ENCODE measurements at regions of chr11 and their contacts with region 1.

Region 1: GRCh38 chr11:78645226-78646202 is 70.8 kb upstream of the NARS2 start:
- DNase-seq: peak; percentile 96
- ATAC-seq: peak; percentile 73
- H3K4me3 ChIP-seq: peak overlapping the region; percentile 54
- H3K27ac ChIP-seq: peak overlapping the region; percentile 78
- H3K4me1 ChIP-seq: peaks cover 22% of the 10 kb centered on the region
- H3K27me3 ChIP-seq: no peaks in the 10 kb centered on the region
- CTCF ChIP-seq: peak; percentile 99

Region 2: DNA sequence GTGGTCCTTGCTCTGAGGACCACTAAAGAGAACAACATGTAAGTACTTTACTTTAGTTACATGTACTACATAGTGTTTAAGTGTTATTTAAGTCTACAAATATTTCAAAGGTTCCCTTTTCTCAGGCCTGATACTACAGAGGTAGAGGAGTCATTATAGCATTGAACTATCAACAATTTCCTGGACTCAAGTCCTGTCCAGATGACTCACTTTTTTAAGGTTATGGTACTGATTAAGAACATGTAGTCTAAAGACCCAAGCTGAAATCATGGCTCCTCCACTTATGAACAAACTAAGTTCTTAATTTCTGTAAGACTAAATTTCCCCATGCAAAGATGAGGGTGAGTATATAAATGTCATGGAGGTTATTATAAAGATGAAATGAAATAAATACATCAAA is 145.5 kb before region 1 on chr11:
- CTCF ChIA-PET with region 1: no interaction called
- POLR2A ChIA-PET with region 1: no interaction called
- intact Hi-C with region 1: no loop called
- DNase-seq: no peak
- ATAC-seq: no peak
- H3K4me3 ChIP-seq: no peak overlapping the region
- H3K27ac ChIP-seq: no peak overlapping the region
- H3K4me1 ChIP-seq: no peaks in the 10 kb centered on the region
- H3K27me3 ChIP-seq: no peaks in the 10 kb centered on the region
- CTCF ChIP-seq: no peak

Region 3: DNA sequence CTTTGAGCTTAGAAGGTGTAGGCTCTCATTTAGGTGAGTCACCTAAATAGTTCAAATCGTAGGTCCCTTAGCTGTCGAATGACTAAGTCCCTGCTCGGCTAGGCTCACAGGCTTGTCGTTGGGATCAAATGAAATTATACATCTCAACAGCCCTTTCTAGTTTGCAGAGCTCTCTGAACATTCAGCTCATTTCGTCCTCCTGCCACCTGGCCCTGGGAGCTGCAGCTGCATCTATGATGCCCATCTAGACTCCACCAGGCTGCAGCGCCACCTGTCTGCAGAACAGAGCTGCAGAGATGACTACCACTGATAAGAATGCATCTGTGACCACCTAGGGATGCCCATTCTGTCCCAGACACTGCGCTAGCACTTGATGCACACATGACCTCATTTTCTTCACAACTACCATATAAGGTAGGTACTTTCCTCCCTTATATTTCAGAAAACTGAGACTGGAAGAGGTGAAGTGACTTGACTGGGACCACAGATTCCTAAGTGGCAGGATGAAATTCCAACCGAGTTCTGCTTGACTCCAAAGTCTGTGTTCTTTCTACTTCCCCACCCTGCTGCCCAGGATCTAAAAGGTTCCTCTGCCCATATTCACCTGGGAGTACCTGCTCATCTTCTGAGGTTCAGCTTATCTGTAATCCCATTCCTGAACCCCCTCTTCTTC is 70.3 kb after region 1 on chr11:
- CTCF ChIA-PET with region 1: interaction called, 129 read pairs
- POLR2A ChIA-PET with region 1: interaction called, 5 read pairs
- intact Hi-C with region 1: loop called (anchors 1 kb)
- DNase-seq: peak; percentile 99
- ATAC-seq: peak; percentile 90
- H3K4me3 ChIP-seq: no peak overlapping the region
- H3K27ac ChIP-seq: peak overlapping the region; percentile 77
- H3K4me1 ChIP-seq: peaks cover 33% of the 10 kb centered on the region
- H3K27me3 ChIP-seq: no peaks in the 10 kb centered on the region
- CTCF ChIP-seq: peak; percentile 98

Region 4: GRCh38 chr11:79100093-79100910 is 454.8 kb after region 1 on chr11:
- CTCF ChIA-PET with region 1: interaction called, 29 read pairs
- POLR2A ChIA-PET with region 1: no interaction called
- intact Hi-C with region 1: loop called (anchors 1 kb)
- DNase-seq: peak; percentile 80
- ATAC-seq: peak; percentile 92
- H3K4me3 ChIP-seq: no peak overlapping the region
- H3K27ac ChIP-seq: no peak overlapping the region
- H3K4me1 ChIP-seq: no peaks in the 10 kb centered on the region
- H3K27me3 ChIP-seq: no peaks in the 10 kb centered on the region
- CTCF ChIP-seq: peak; percentile 93

Region 5: DNA sequence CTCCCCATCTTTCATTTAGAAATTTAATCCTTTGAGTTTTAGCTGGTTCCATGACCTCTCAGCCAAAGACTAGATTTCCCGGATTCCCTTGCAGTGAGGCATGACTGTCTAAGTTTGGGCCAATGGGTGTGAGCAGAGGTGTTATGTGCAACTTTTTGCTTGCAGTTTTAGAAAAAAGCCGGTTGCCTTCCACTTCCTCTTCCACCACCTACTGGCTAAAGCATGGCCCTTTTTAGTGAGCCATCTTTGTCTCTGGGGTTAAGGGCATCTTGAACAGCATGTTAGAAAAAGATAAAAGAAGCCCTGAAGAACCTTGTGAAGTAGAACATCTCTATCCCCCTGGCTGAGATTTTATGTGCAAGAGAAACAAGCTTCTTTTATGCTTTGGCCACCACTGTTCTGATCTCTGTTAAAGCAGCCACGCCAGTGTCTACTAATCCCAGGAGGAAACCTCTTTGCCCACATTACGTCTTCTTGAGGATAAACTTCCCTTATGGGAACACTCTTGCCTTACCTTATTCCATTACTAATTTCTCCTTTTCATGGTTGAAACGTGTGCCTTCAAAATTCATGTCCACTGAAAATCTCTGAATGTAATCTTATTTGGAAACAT is 515.4 kb after region 1 on chr11:
- CTCF ChIA-PET with region 1: interaction called, 3 read pairs
- POLR2A ChIA-PET with region 1: no interaction called
- intact Hi-C with region 1: loop called (anchors 1 kb)
- DNase-seq: peak; percentile 81
- ATAC-seq: peak; percentile 77
- H3K4me3 ChIP-seq: no peak overlapping the region
- H3K27ac ChIP-seq: no peak overlapping the region
- H3K4me1 ChIP-seq: peaks cover 6% of the 10 kb centered on the region
- H3K27me3 ChIP-seq: peaks cover 3% of the 10 kb centered on the region; the same call in 1 of the 2 replicates
- CTCF ChIP-seq: peak; percentile 85

Region 6: DNA sequence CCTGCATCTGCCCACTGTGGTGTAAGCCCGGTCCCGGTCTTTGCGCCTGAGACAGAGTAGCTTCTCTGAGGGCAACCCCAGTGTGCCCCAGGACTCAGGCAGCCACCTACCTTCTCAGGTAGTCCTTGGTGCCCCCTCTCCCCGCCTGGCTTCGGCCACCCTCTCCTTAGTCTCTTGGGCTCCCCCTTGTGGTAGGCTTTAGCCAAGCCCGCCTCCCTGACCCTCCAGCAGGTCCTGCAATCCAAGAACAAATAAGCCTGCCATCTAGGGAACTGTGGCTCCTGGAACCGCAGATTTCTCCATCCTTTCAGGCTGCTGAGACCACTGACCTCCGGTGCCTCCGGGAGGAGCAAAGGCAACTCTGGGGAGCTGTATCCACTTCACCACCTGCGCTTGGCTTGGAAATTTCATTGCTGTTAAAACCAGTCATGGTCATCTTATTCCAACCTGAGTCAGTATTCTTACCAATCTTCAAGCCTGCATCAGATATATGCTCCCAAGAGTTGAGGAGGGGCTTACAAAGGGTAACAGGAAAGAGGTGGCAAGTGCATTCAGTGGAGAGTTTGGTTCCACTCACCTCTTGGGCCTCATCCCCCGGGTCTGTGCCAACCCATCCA is 848.1 kb after region 1 on chr11:
- CTCF ChIA-PET with region 1: no interaction called
- POLR2A ChIA-PET with region 1: no interaction called
- intact Hi-C with region 1: loop called (anchors 2 kb)
- DNase-seq: peak; percentile 83
- ATAC-seq: peak; percentile 79
- H3K4me3 ChIP-seq: no peak overlapping the region
- H3K27ac ChIP-seq: no peak overlapping the region
- H3K4me1 ChIP-seq: no peaks in the 10 kb centered on the region
- H3K27me3 ChIP-seq: peaks cover 18% of the 10 kb centered on the region; the same call in 1 of the 2 replicates
- CTCF ChIP-seq: peak; percentile 96

Measured in PC-3 (cell line).